ENCODE measurements at regions of chrX and their contacts with region 1.

Region 1: GRCh38 chrX:15988661-15989603 is 134.3 kb upstream of the AP1S2 start:
- DNase-seq: no peak
- H3K4me3 Mint-ChIP-seq: no peak overlapping the region
- H3K27ac Mint-ChIP-seq: no peak overlapping the region
- H3K4me1 Mint-ChIP-seq: peaks cover 9% of the 10 kb centered on the region
- H3K27me3 Mint-ChIP-seq: peaks cover 9% of the 10 kb centered on the region

Region 2: GRCh38 chrX:16023790-16024734 is 35.1 kb after region 1 on chrX:
- CTCF ChIA-PET with region 1: no interaction called
- intact Hi-C with region 1: loop called (anchors 5 kb)
- DNase-seq: no peak
- H3K4me3 Mint-ChIP-seq: no peak overlapping the region
- H3K27ac Mint-ChIP-seq: no peak overlapping the region
- H3K4me1 Mint-ChIP-seq: peaks cover 20% of the 10 kb centered on the region
- H3K27me3 Mint-ChIP-seq: peaks cover 4% of the 10 kb centered on the region

Region 3: DNA sequence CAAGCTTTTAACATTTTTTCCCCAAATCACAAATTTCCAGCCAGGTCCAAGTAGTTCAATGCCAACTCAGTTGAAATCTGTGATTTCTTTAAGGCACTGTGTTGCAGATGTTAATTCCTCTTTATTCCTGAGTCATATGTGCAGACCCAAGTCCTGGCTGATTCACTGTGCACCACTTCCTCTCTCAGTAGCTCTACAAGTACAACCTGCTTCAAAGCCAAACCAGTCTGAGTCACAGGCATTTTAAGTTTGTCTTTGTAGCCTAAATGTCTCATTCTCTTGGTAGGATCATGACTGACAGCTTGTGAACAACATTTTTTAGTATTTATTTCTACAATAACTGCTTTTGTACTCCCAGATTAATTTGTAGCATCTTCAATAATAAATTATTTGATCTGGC is 495.4 kb after region 1 on chrX:
- CTCF ChIA-PET with region 1: no interaction called
- intact Hi-C with region 1: loop called (anchors 5 kb)
- DNase-seq: peak; percentile 66
- H3K4me3 Mint-ChIP-seq: no peak overlapping the region
- H3K27ac Mint-ChIP-seq: no peak overlapping the region
- H3K4me1 Mint-ChIP-seq: peaks cover 34% of the 10 kb centered on the region
- H3K27me3 Mint-ChIP-seq: no peaks in the 10 kb centered on the region